ENCODE measurements at regions of chr1 and their contacts with region 1.

Region 1: DNA sequence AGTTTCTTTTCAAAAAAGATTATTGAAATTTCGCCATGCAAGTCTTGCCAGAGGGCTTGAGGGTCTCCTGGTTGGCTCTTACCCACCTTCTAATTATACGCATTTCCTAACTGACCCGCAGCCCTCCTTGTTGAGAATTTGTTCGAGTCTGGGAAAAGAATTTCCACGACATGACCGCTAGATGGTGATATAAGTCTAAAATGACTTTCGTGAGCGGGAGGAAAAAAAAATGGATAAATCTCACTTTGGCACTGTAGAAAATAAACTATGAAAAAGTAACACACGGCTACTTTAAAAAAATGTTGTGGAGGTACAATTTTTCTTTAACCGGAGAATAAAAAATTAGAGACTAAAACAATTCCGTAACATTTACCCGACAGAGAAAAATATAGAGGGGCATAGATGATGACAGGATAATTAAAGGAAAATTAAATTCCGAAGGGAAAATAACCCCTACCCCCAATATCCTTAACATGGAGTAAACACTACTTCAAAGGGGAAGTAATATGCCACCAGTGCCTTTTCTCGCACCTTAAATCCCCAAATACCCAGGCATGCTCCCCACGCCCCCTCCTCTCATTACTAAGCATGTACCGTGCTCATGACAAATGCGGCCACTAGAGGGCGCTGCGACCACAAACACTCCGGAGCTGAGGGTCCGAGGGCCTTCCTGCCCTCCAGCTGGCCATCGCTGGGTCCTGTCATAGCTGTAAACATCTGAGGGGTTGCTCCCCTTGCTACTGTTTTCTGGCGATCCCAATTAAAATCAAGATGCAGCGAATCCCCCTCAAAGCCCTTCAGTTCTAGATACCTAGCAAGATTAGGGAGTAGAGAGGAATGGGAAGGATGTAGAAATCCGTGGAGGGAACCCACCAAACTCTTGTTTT is 266.9 kb downstream of the ASTN1 start:
- DNase-seq: peak; percentile 81
- ATAC-seq: peak; percentile 81

Region 2: GRCh38 chr1:176961678-176962077 is 64.1 kb after region 1 on chr1:
- intact Hi-C with region 1: no loop called
- DNase-seq: no peak
- ATAC-seq: no peak

Region 3: GRCh38 chr1:177181631-177182291 is 284.2 kb after region 1 on chr1:
- intact Hi-C with region 1: loop called (anchors 2 kb)
- DNase-seq: peak; percentile 77
- ATAC-seq: peak; percentile 83

Region 4: DNA sequence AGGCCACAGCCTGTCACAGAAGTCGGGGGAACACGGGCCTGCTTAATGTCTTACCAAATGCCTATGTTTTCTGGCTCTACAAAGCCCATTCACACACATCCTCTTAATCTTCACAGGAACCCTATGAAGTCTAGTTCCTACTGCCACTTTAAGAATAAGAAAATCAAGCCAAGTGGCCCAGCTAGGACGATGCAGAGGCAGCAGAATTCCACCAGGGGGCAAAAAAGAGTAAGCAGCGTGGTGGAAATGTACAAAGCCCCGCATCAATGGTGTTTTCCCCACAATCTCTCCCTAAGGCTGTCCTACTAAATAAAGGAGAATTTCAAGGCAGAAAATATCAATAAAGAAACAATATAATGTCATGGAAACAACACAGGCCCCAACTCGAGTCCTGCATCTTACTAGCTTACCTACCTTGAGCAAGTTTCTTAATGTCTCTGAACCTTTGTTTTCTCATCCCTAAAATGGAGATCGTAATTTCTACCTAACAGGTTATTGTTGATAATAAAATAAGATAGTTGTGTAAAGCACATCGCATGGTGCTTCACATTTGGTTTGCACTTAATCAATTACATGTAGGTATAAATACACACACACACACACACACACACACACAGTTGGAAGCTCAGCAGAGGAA is 1050.9 kb after region 1 on chr1:
- intact Hi-C with region 1: loop called (anchors 10 kb)
- DNase-seq: peak; percentile 69
- ATAC-seq: peak; percentile 66

Measured in sciatic nerve (tissue), 2 donors.